Heart left ventricle (tissue), 16 donors: ENCODE measurements at regions of chr6 and their contacts with region 1.

Region 1: DNA sequence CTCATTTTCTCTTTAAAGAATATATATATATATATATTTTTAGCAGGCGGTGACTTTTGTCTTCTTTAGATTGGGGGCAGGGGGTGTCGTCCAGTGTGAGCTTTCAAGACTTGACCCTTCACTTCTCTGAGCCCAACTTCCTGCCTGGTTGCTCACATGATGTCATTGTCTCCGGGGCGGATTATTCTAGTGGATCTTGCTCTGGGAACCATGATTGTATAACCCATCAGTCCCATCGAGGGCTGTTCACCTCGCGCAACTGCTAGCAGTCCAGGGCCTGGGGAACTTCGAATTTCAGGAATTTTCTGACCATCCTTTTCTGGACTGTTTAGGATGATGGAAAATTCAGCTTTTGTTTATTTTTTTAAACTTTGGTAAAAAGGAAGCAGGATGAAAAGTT is 1.0 kb downstream of the IGF2R start:
- DNase-seq: peak in 4 of 5 donors; percentile 58 to 74 (median 62)
- ATAC-seq: peak; percentile 30 to 85 (median 60)
- H3K4me3 ChIP-seq: peak overlapping the region; percentile 76 to 99 (median 94)
- H3K27ac ChIP-seq: peak overlapping the region; percentile 62 to 96 (median 92)
- H3K4me1 ChIP-seq: peaks cover 0 to 73% (median 41%) of the 10 kb centered on the region in 12 donors
- H3K27me3 ChIP-seq: no peaks in the 10 kb centered on the region
- CTCF ChIP-seq: no peak
- POLR2A ChIP-seq: no peak

Region 2: DNA sequence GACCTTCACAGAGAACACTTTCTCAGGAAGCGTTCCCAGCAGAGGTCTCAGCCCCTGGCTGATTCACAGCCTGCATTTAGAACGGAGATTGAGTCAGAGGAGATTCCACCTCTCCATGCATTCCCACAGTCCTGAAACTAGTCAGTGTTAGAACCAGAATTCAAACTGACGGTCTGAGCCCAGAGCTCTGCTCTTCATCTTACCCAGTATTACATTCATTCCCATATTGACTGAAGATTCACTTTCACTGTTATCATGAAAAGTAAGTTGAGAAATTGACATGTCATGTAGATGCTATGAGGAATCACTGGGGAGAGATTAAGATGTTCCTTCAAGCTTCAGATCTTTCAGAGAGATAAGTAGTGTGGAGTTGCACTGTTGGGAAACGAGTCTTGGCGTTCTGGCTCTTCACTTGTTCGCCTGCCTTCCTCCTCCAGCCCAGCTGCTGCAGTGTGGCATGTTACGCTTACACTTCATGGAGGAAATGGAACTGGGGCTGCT is 50.9 kb before region 1 on chr6:
- intact Hi-C with region 1: no loop called
- DNase-seq: no peak
- ATAC-seq: no peak
- H3K4me3 ChIP-seq: no peak overlapping the region
- H3K27ac ChIP-seq: no peak overlapping the region
- H3K4me1 ChIP-seq: no peaks in the 10 kb centered on the region
- H3K27me3 ChIP-seq: no peaks in the 10 kb centered on the region
- CTCF ChIP-seq: no peak
- POLR2A ChIP-seq: no peak

Region 3: DNA sequence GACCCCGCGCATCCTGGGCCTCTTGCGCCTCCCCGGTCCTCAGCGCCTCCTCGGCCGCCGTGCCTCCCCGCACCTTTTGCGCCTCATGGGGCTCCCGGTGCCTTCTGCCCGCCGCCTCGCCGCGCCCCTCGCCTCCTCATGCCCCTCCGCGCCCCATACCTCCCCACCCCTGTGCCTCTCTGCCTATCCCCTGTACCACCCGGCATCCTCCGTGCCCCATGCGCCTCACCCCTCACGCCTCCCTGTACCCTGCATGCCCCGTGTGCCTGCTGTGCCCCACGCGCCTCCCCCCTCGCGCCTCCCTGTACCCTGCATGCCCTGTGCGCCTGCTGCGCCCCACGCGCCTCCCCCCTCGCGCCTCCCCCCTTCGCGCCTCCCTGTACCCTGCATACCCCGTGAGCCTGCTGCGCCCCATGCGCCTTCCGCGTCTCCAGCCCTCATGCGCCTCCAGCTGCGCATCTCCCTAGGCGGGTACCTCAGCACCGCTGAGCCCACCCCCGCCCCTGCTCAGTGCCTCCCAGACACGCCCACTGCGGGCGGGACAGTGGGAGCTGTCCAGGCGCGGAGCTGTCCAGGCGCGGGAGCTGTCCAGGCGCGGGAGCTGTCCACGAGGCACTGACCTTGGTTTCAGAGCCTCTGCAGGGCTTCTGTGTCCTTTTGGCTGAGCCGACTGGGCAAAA is 36.1 kb after region 1 on chr6:
- intact Hi-C with region 1: loop called in 2 of 10 experiments (anchors 5 kb)
- DNase-seq: peak; percentile 49 to 72 (median 57)
- ATAC-seq: peak; percentile 55 to 86 (median 84)
- H3K4me3 ChIP-seq: peak overlapping the region in 1 of 12 donors; percentile 21
- H3K27ac ChIP-seq: no peak overlapping the region
- H3K4me1 ChIP-seq: peaks cover 0 to 51% (median 15%) of the 10 kb centered on the region in 12 donors
- H3K27me3 ChIP-seq: no peaks in the 10 kb centered on the region
- CTCF ChIP-seq: no peak
- POLR2A ChIP-seq: no peak